HCT116 (cell line): ENCODE measurements at regions of chr3 and their contacts with region 1.

Region 1: DNA sequence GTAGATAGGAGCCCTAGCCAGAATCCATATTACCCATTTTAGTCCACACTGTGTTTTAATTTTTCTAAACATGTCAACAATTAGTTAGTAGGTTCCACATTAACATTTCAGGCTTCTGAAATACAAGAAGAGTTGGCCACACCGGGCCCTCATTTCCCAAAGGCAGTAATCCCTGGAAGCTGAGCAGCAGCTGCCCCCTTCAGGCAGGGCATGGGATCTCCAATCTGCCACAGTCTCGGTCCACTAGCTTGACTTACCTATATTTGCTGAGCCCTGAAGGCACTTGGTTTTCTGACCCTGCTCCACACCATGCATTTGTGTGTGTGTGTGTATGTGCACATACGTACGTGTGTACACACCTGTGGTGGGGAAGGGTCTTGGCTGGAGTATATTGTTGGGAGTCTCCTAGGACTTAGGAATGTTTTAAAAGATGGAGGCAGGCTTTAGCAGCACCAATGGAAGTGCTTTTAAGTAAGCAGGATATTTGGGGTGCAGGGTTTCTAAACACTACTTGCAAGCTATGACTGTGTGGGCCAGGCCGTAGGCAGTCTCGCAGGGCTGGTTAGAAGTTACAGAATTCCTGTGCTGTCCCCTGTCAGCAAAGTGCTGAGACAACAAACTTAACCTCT is 71.2 kb upstream of the SOX14 start:
- DNase-seq: peak; percentile 13
- ATAC-seq: peak; percentile 92
- H3K4me3 ChIP-seq: no peak overlapping the region
- H3K27ac ChIP-seq: no peak overlapping the region
- H3K4me1 ChIP-seq: no peaks in the 10 kb centered on the region
- H3K27me3 ChIP-seq: peaks cover 22% of the 10 kb centered on the region
- CTCF ChIP-seq: peak; percentile 41 to 83 (median 81); a peak in 5 of 6 replicates
- POLR2A ChIP-seq: no peak
- RAD21 ChIP-seq: peak; percentile 78

Region 2: DNA sequence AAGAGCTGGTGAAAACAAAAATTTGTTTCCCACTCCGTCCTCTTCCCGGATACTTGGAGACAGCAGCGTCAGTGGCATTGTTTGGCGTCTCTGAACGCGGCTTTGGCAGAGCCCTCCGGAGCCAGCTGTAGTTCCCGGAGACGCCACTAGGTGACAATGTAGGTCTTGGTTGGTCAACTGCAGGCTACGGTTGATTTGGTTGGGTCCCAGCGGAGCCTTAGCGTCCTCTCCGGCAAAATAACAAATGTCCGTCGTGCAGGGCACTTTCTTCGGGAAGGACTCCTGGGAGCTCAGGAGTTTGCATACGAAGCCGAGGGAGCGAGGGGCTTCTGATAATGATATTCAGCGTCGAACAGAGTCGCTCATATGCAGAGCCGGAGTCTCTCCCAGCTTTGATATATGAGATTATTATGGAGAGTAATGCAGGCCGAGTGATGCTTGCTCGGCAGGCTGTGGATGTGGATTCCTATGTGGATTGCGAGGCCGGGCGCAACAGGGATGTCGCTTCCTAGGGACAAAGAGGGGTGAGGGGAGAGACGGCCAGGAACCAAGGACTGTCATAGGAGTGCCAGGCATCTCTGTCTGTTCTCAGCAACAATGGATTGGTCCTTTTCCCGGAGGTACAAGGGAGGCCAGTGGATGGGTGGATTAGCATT is 660.3 kb before region 1 on chr3:
- CTCF ChIA-PET with region 1: interaction called, 4 read pairs
- POLR2A ChIA-PET with region 1: no interaction called
- RAD21 ChIA-PET with region 1: no interaction called
- intact Hi-C with region 1: loop called (anchors 5 kb)
- DNase-seq: peak; percentile 68
- ATAC-seq: peak; percentile 90
- H3K4me3 ChIP-seq: peak overlapping the region; percentile 19 to 36; a peak in 3 of 4 replicates
- H3K27ac ChIP-seq: no peak overlapping the region
- H3K4me1 ChIP-seq: peaks cover 0 to 11% of the 10 kb centered on the region in 2 experiments; a peak in 2 of 4 replicates
- H3K27me3 ChIP-seq: no peaks in the 10 kb centered on the region
- CTCF ChIP-seq: peak; percentile 66 to 95 (median 87)
- POLR2A ChIP-seq: no peak
- RAD21 ChIP-seq: peak; percentile 84

Region 3: GRCh38 chr3:137105277-137105977 is 587.5 kb before region 1 on chr3:
- CTCF ChIA-PET with region 1: interaction called, 17 read pairs
- POLR2A ChIA-PET with region 1: no interaction called
- RAD21 ChIA-PET with region 1: no interaction called
- intact Hi-C with region 1: loop called (anchors 1 kb)
- DNase-seq: peak; percentile 52
- ATAC-seq: peak; percentile 82
- H3K4me3 ChIP-seq: no peak overlapping the region
- H3K27ac ChIP-seq: no peak overlapping the region
- H3K4me1 ChIP-seq: no peaks in the 10 kb centered on the region
- H3K27me3 ChIP-seq: peaks cover 37% of the 10 kb centered on the region
- CTCF ChIP-seq: peak; percentile 52 to 85 (median 70); a peak in 5 of 6 replicates
- POLR2A ChIP-seq: no peak
- RAD21 ChIP-seq: peak; percentile 81

Region 4: GRCh38 chr3:137110484-137110883 is 582.4 kb before region 1 on chr3:
- CTCF ChIA-PET with region 1: interaction called, 17 read pairs
- POLR2A ChIA-PET with region 1: no interaction called
- RAD21 ChIA-PET with region 1: no interaction called
- intact Hi-C with region 1: loop called (anchors 1 kb)
- DNase-seq: peak; percentile 12
- ATAC-seq: peak; percentile 89
- H3K4me3 ChIP-seq: no peak overlapping the region
- H3K27ac ChIP-seq: no peak overlapping the region
- H3K4me1 ChIP-seq: no peaks in the 10 kb centered on the region
- H3K27me3 ChIP-seq: peaks cover 37% of the 10 kb centered on the region
- CTCF ChIP-seq: peak; percentile 22 to 78 (median 64); a peak in 5 of 6 replicates
- POLR2A ChIP-seq: no peak
- RAD21 ChIP-seq: peak; percentile 56

Region 5: GRCh38 chr3:137121704-137122314 is 571.1 kb before region 1 on chr3:
- CTCF ChIA-PET with region 1: interaction called, 6 read pairs
- POLR2A ChIA-PET with region 1: no interaction called
- RAD21 ChIA-PET with region 1: no interaction called
- intact Hi-C with region 1: loop called (anchors 5 kb)
- DNase-seq: peak; percentile 61
- ATAC-seq: peak; percentile 95
- H3K4me3 ChIP-seq: no peak overlapping the region
- H3K27ac ChIP-seq: no peak overlapping the region
- H3K4me1 ChIP-seq: no peaks in the 10 kb centered on the region
- H3K27me3 ChIP-seq: peaks cover 15% of the 10 kb centered on the region
- CTCF ChIP-seq: peak; percentile 36 to 86 (median 83); a peak in 5 of 6 replicates
- POLR2A ChIP-seq: no peak
- RAD21 ChIP-seq: peak; percentile 55

Region 6: GRCh38 chr3:137217733-137218132 is 475.2 kb before region 1 on chr3:
- CTCF ChIA-PET with region 1: no interaction called
- POLR2A ChIA-PET with region 1: no interaction called
- RAD21 ChIA-PET with region 1: no interaction called
- intact Hi-C with region 1: loop called (anchors 5 kb)
- DNase-seq: no peak
- ATAC-seq: peak; percentile 75
- H3K4me3 ChIP-seq: no peak overlapping the region
- H3K27ac ChIP-seq: no peak overlapping the region
- H3K4me1 ChIP-seq: no peaks in the 10 kb centered on the region
- H3K27me3 ChIP-seq: no peaks in the 10 kb centered on the region; the same call in 1 of the 2 replicates
- CTCF ChIP-seq: peak; percentile 29 to 79 (median 67); a peak in 5 of 6 replicates
- POLR2A ChIP-seq: no peak
- RAD21 ChIP-seq: peak; percentile 50

Region 7: GRCh38 chr3:137409584-137409983 is 283.3 kb before region 1 on chr3:
- CTCF ChIA-PET with region 1: no interaction called
- POLR2A ChIA-PET with region 1: no interaction called
- RAD21 ChIA-PET with region 1: no interaction called
- intact Hi-C with region 1: loop called (anchors 2 kb)
- DNase-seq: no peak
- ATAC-seq: peak; percentile 47; the same call in 1 of the 2 replicates
- H3K4me3 ChIP-seq: no peak overlapping the region
- H3K27ac ChIP-seq: no peak overlapping the region
- H3K4me1 ChIP-seq: no peaks in the 10 kb centered on the region
- H3K27me3 ChIP-seq: no peaks in the 10 kb centered on the region
- CTCF ChIP-seq: peak; percentile 23 to 44 (median 39); a peak in 4 of 6 replicates
- POLR2A ChIP-seq: no peak
- RAD21 ChIP-seq: peak; percentile 16; the same call in 1 of the 2 replicates

Region 8: GRCh38 chr3:139187650-139188049 is 1494.7 kb after region 1 on chr3:
- CTCF ChIA-PET with region 1: no interaction called
- POLR2A ChIA-PET with region 1: no interaction called
- RAD21 ChIA-PET with region 1: no interaction called
- intact Hi-C with region 1: no loop called
- DNase-seq: no peak
- ATAC-seq: peak; percentile 61
- H3K4me3 ChIP-seq: no peak overlapping the region
- H3K27ac ChIP-seq: no peak overlapping the region
- H3K4me1 ChIP-seq: no peaks in the 10 kb centered on the region
- H3K27me3 ChIP-seq: no peaks in the 10 kb centered on the region
- CTCF ChIP-seq: no peak
- POLR2A ChIP-seq: no peak
- RAD21 ChIP-seq: peak; percentile 22; the same call in 1 of the 2 replicates